ENCODE measurements at regions of chr2 and their contacts with region 1.

Region 1: DNA sequence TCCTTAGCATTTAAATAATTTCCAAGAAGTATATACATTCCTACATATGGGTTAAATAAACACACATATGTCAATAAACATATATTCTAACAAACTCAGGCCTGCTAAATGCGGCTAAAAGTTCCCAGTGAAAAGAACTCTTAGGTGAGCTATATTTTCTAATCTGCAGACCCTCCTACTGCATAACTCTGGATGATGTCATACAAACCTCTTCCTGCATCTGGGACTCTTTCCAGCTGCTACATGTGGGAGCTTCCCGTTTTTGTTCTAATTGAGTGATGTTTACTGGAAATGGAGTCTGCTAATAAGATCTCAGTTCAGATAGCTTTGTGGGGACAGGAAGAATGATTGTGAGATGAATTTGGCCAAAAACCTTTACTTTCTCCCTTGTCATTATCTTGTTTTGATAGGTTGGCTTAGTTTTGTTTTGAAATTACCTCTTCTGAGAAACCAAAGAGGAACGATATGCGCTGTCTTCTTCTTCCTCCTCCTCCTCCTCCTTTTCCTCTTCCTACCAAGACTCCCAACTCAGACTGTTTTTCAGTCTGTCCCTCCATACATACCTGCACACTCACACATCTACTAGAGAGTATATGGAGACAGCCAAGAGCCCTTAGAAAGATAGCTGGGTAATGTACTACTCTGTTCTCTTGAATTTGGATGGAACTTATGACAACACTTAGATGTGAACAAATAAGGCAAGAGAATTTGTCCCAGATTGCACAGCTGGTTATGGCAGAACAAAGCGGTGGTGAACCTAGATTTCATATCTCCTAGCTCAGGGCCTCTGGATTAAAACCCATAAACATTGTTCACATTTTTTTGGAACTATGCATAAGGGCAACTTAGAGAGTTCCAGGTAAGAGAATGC is 39.8 kb upstream of the AAK1 start:
- DNase-seq: peak in 1 of 2 experiments; percentile 55
- H3K4me3 ChIP-seq: no peak overlapping the region
- H3K27ac ChIP-seq: no peak overlapping the region
- H3K4me1 ChIP-seq: 0 out of 2 replicates have a peak, but pooled peaks cover 9% of the 10 kb centered on the region
- H3K27me3 ChIP-seq: no peaks in the 10 kb centered on the region
- CTCF ChIP-seq: no peak

Region 2: GRCh38 chr2:69509007-69509749 is 174.2 kb before region 1 on chr2:
- CTCF ChIA-PET with region 1: interaction called, 19 read pairs
- POLR2A ChIA-PET with region 1: no interaction called
- intact Hi-C with region 1: no loop called
- DNase-seq: no peak
- H3K4me3 ChIP-seq: no peak overlapping the region
- H3K27ac ChIP-seq: no peak overlapping the region
- H3K4me1 ChIP-seq: no peaks in the 10 kb centered on the region
- H3K27me3 ChIP-seq: no peaks in the 10 kb centered on the region
- CTCF ChIP-seq: no peak

Region 3: DNA sequence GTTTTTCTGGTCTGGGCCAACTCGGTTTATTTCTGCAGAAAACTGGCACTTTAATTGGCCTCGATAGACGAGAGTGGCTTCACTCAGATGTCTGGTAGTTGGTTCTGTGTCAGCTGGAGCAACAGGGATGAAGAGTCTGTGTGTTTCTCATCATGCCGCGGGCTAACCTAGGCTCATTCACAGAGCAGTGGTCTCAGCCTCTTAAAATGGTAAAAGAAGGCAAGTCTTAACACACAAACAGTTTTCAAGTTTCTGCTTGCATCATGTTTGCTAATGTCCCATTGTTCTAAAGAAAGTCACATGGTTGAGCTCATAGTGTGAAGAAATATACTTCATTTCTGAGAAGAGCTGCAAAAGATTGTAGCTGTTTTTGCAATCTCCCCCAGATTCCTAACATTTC is 21.1 kb after region 1 on chr2:
- CTCF ChIA-PET with region 1: no interaction called
- POLR2A ChIA-PET with region 1: no interaction called
- intact Hi-C with region 1: no loop called
- DNase-seq: no peak
- H3K4me3 ChIP-seq: no peak overlapping the region
- H3K27ac ChIP-seq: no peak overlapping the region
- H3K4me1 ChIP-seq: no peaks in the 10 kb centered on the region
- H3K27me3 ChIP-seq: no peaks in the 10 kb centered on the region
- CTCF ChIP-seq: no peak

Region 4: GRCh38 chr2:69720404-69720803 is 37.1 kb after region 1 on chr2:
- CTCF ChIA-PET with region 1: no interaction called
- POLR2A ChIA-PET with region 1: no interaction called
- intact Hi-C with region 1: no loop called
- DNase-seq: no peak
- H3K4me3 ChIP-seq: no peak overlapping the region
- H3K27ac ChIP-seq: no peak overlapping the region
- H3K4me1 ChIP-seq: no peaks in the 10 kb centered on the region
- H3K27me3 ChIP-seq: no peaks in the 10 kb centered on the region
- CTCF ChIP-seq: peak; percentile 55

Region 5: GRCh38 chr2:69734035-69734631 is 50.8 kb after region 1 on chr2:
- CTCF ChIA-PET with region 1: no interaction called
- POLR2A ChIA-PET with region 1: interaction called, 22 read pairs
- intact Hi-C with region 1: no loop called
- DNase-seq: no peak
- H3K4me3 ChIP-seq: no peak overlapping the region
- H3K27ac ChIP-seq: no peak overlapping the region
- H3K4me1 ChIP-seq: peaks cover 17% of the 10 kb centered on the region
- H3K27me3 ChIP-seq: no peaks in the 10 kb centered on the region
- CTCF ChIP-seq: no peak

Region 6: GRCh38 chr2:70607121-70607561 is 923.8 kb after region 1 on chr2:
- CTCF ChIA-PET with region 1: no interaction called
- POLR2A ChIA-PET with region 1: no interaction called
- intact Hi-C with region 1: no loop called
- DNase-seq: no peak
- H3K4me3 ChIP-seq: no peak overlapping the region
- H3K27ac ChIP-seq: no peak overlapping the region
- H3K4me1 ChIP-seq: no peaks in the 10 kb centered on the region
- H3K27me3 ChIP-seq: no peaks in the 10 kb centered on the region
- CTCF ChIP-seq: no peak

Measured in PC-9 (cell line).